ENCODE measurements at regions of chr21 and their contacts with region 1.

Region 1: DNA sequence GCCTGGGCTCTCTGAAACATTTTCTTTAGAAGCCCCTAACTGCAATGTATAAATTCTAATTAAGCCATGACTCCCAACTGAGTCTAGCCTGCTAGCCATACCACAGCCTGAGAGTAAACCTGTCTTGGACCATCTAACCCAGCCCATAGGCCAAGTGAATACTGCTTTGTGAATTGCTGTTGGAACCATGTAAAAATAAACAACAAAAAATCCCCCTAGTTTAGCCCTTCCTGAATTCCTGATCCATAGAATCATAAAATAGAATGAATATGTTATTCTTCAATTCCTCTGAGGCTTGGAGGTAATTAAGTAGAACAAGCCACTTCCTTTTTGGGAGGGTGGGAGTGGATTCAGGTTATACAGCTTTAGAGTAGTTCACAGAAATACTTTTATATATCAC is 1496.4 kb downstream of the MRPL39 start:
- DNase-seq: peak; percentile 9
- ATAC-seq: peak; percentile 37; the same call in 1 of the 2 replicates
- H3K4me3 ChIP-seq: no peak overlapping the region
- H3K27ac ChIP-seq: no peak overlapping the region
- H3K4me1 ChIP-seq: no peaks in the 10 kb centered on the region
- H3K27me3 ChIP-seq: no peaks in the 10 kb centered on the region
- CTCF ChIP-seq: no peak

Region 2: GRCh38 chr21:24055696-24056095 is 55.1 kb before region 1 on chr21:
- CTCF ChIA-PET with region 1: no interaction called
- POLR2A ChIA-PET with region 1: no interaction called
- intact Hi-C with region 1: no loop called
- DNase-seq: no peak
- ATAC-seq: no peak
- H3K4me3 ChIP-seq: no peak overlapping the region
- H3K27ac ChIP-seq: no peak overlapping the region
- H3K4me1 ChIP-seq: no peaks in the 10 kb centered on the region
- H3K27me3 ChIP-seq: no peaks in the 10 kb centered on the region
- CTCF ChIP-seq: no peak

Region 3: GRCh38 chr21:24093032-24093431 is 17.8 kb before region 1 on chr21:
- CTCF ChIA-PET with region 1: no interaction called
- POLR2A ChIA-PET with region 1: interaction called, 11 read pairs
- intact Hi-C with region 1: no loop called
- DNase-seq: no peak
- ATAC-seq: no peak
- H3K4me3 ChIP-seq: no peak overlapping the region
- H3K27ac ChIP-seq: no peak overlapping the region
- H3K4me1 ChIP-seq: no peaks in the 10 kb centered on the region
- H3K27me3 ChIP-seq: no peaks in the 10 kb centered on the region
- CTCF ChIP-seq: no peak

Region 4: DNA sequence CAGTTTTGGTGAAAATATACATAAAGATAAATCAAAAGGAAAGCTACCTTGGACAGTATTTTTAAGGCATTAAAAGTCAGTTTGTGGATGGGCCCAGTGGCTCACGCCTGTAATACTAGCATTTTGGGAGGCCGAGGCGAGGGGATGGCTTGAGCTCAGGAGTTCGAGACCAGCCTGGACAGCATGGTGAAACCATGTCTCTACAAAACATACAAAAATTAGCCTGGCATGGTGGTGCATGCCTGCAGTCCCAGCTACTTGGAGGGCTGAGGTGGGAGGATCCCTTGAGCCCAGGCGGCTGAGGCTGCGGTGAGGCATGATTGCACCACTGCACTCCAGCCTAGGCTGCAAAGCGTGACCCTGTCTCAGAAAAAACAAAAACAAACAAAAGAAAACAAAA is 242.6 kb after region 1 on chr21:
- CTCF ChIA-PET with region 1: interaction called, 10 read pairs
- POLR2A ChIA-PET with region 1: no interaction called
- intact Hi-C with region 1: no loop called
- DNase-seq: no peak
- ATAC-seq: no peak
- H3K4me3 ChIP-seq: no peak overlapping the region
- H3K27ac ChIP-seq: no peak overlapping the region
- H3K4me1 ChIP-seq: no peaks in the 10 kb centered on the region
- H3K27me3 ChIP-seq: no peaks in the 10 kb centered on the region
- CTCF ChIP-seq: no peak

Region 5: DNA sequence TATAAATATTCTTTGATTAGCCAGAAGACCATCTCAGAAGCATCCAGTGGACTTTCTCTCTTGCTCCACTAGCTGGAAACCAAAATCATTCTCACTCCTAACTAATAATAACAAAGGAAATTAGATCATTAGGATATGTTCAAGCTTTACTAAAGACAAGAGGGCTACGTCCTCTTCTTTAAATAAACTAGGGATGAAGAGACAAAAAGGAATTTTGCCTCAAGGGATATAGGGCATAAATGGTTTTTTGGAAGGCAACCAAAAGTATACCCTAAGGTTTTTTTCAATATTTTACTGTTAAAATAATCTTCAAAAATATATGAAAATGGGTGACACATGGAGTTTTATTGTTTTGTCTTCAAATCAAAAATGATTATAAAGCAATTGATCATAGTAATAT is 750.6 kb after region 1 on chr21:
- CTCF ChIA-PET with region 1: no interaction called
- POLR2A ChIA-PET with region 1: interaction called, 18 read pairs
- intact Hi-C with region 1: no loop called
- DNase-seq: peak; percentile 27
- ATAC-seq: no peak
- H3K4me3 ChIP-seq: no peak overlapping the region
- H3K27ac ChIP-seq: no peak overlapping the region
- H3K4me1 ChIP-seq: no peaks in the 10 kb centered on the region
- H3K27me3 ChIP-seq: no peaks in the 10 kb centered on the region
- CTCF ChIP-seq: no peak